Activated CD8-positive, alpha-beta memory T cell treated with anti-CD3 and anti-CD28 coated beads, Interleukin-2, amount 10 ng/mL, durations not matched to agents 7 days and 5 days (primary cell): ENCODE measurements at regions of chr1 and their contacts with region 1.

Region 1: DNA sequence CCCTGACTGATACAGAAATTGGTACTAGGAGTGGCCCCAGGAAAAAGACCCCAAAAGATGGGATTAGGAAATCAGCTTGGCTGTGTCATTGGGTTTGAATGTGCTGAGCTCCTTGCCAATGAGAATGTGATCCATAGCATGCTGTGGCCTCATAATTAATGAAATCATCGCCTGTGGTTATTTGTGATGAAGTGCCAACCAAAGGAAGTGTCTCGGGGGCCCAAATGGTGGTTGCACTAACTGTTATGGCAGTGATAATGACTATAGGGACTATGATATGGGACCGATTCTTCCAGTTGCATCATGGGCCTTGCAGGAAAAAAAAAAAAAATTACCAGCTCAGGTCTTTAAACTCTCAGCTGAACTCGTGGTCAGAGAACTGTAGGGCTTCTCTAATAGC is 15.4 kb upstream of the ZDHHC18 start:
- DNase-seq: no peak
- ATAC-seq: peak; percentile 23
- H3K4me3 Mint-ChIP-seq: no peak overlapping the region
- H3K27ac Mint-ChIP-seq: peak overlapping the region; percentile 43
- H3K4me1 Mint-ChIP-seq: peaks cover 28% of the 10 kb centered on the region
- H3K27me3 Mint-ChIP-seq: no peaks in the 10 kb centered on the region

Region 2: GRCh38 chr1:26602378-26602959 is 208.6 kb before region 1 on chr1:
- CTCF ChIA-PET with region 1: interaction called, 30 read pairs
- DNase-seq: no peak
- ATAC-seq: no peak
- H3K4me3 Mint-ChIP-seq: no peak overlapping the region
- H3K27ac Mint-ChIP-seq: no peak overlapping the region
- H3K4me1 Mint-ChIP-seq: peaks cover 15% of the 10 kb centered on the region
- H3K27me3 Mint-ChIP-seq: peaks cover 28% of the 10 kb centered on the region

Region 3: DNA sequence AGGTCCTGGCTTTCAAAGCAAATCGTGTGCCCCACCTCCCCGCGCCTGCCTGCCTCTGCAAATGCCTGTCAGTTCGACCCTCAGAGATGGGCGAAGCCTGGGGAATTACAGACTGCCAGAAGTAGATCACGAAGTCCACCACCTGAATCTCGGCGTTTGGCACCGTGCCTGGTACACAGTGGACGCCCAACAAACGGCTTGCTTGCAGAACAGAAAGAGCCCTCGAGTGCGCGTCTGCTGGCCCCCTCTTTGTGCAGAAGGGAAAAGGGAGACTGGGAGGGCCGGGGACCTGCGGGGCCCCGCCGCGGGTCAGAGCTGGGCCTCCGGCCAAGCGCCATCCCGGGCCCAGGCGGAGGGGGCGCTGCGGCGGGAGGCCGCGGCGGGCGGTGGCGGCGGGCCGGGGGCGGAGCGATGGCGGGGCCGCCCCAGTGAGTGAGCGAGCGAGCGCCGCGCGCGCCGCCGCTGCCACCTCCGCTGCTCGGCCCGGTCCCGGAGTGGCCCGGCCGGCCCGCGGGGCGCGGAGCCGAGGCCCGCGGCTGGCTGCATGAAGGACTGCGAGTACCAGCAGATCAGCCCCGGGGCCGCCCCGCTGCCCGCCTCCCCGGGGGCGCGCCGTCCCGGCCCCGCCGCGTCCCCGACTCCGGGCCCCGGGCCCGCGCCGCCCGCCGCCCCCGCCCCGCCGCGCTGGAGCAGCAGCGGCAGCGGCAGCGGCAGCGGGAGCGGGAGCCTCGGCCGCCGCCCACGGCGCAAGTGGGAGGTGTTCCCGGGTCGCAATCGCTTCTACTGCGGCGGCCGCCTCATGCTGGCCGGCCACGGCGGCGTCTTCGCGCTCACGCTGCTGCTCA is 15.4 kb after region 1 on chr1 and contains the start of gene ZDHHC18:
- CTCF ChIA-PET with region 1: interaction called, 108 read pairs
- DNase-seq: peak; percentile 70
- ATAC-seq: peak; percentile 93
- H3K4me3 Mint-ChIP-seq: peak within 1 kb of the TSS; percentile 90
- H3K27ac Mint-ChIP-seq: peak within 1 kb of the TSS; percentile 85
- H3K4me1 Mint-ChIP-seq: peaks cover 52% of the 10 kb centered on the region
- H3K27me3 Mint-ChIP-seq: no peaks in the 10 kb centered on the region
- total RNA-seq, gene ZDHHC18: 53.1 to 54.9 TPM

Region 4: DNA sequence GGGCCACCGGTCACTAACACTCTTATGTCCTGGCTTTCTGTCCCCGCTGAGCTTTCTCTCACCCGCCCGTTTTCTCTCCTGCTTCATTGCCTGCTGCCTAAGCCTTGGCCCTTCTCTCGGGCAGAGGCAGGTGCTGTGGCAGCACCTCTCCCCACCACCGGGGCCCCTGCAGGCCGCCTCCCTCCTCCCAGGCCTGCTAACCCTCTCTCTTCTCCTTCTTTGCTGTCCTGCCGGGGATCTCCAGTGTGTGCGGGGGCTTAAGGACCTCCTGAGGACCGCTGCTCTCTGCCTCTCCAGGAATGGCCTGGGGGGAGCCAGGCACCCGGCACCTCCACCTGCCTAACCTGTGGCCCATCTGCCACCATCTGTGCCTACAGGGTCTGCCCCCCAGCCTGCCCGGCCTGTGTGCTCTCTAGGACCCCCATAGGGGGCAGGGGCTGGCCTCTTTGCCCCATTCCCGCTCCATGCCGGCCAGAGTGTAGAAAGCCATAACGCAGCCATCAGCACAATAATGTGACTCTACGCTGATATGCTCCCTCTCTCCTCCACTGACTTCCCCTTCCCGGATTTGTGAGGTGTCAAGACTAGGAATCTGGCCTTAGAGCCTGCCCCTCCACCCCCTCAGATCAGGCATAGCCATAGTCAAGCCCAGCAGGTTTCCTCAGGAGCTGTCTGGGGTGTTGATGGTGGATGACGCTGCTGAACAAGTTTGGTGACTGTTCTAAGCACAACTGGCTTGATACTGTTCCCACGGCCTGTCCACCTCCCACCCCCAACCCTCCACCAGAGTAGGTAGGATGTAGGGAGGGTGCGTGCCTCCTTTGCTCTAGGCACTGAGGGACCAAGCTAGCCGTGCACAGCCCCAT is 45.8 kb after region 1 on chr1:
- CTCF ChIA-PET with region 1: interaction called, 10 read pairs
- DNase-seq: no peak
- ATAC-seq: no peak
- H3K4me3 Mint-ChIP-seq: no peak overlapping the region
- H3K27ac Mint-ChIP-seq: peak overlapping the region; percentile 50
- H3K4me1 Mint-ChIP-seq: peaks cover 3% of the 10 kb centered on the region
- H3K27me3 Mint-ChIP-seq: no peaks in the 10 kb centered on the region

Region 5: GRCh38 chr1:26874896-26875295 is 63.8 kb after region 1 on chr1:
- CTCF ChIA-PET with region 1: interaction called, 11 read pairs
- DNase-seq: no peak
- ATAC-seq: no peak
- H3K4me3 Mint-ChIP-seq: no peak overlapping the region
- H3K27ac Mint-ChIP-seq: peak overlapping the region; percentile 24
- H3K4me1 Mint-ChIP-seq: peaks cover 6% of the 10 kb centered on the region
- H3K27me3 Mint-ChIP-seq: no peaks in the 10 kb centered on the region

Region 6: GRCh38 chr1:26921126-26921539 is 110.1 kb after region 1 on chr1:
- CTCF ChIA-PET with region 1: no interaction called
- DNase-seq: no peak
- ATAC-seq: peak; percentile 53
- H3K4me3 Mint-ChIP-seq: peak overlapping the region; percentile 91
- H3K27ac Mint-ChIP-seq: peak overlapping the region; percentile 95
- H3K4me1 Mint-ChIP-seq: peaks cover 37% of the 10 kb centered on the region
- H3K27me3 Mint-ChIP-seq: no peaks in the 10 kb centered on the region

Region 7: GRCh38 chr1:27341525-27342252 is 530.6 kb after region 1 on chr1 and contains the start of gene SYTL1:
- CTCF ChIA-PET with region 1: no interaction called
- DNase-seq: peak; percentile 86
- ATAC-seq: peak; percentile 77
- H3K4me3 Mint-ChIP-seq: peak within 1 kb of the TSS; percentile 86
- H3K27ac Mint-ChIP-seq: peak within 1 kb of the TSS; percentile 84
- H3K4me1 Mint-ChIP-seq: peaks cover 34% of the 10 kb centered on the region
- H3K27me3 Mint-ChIP-seq: no peaks in the 10 kb centered on the region
- total RNA-seq, gene SYTL1: 60.7 to 85.3 TPM